Calu3 (cell line): ENCODE measurements at regions of chr4 and their contacts with region 1.

Region 1: DNA sequence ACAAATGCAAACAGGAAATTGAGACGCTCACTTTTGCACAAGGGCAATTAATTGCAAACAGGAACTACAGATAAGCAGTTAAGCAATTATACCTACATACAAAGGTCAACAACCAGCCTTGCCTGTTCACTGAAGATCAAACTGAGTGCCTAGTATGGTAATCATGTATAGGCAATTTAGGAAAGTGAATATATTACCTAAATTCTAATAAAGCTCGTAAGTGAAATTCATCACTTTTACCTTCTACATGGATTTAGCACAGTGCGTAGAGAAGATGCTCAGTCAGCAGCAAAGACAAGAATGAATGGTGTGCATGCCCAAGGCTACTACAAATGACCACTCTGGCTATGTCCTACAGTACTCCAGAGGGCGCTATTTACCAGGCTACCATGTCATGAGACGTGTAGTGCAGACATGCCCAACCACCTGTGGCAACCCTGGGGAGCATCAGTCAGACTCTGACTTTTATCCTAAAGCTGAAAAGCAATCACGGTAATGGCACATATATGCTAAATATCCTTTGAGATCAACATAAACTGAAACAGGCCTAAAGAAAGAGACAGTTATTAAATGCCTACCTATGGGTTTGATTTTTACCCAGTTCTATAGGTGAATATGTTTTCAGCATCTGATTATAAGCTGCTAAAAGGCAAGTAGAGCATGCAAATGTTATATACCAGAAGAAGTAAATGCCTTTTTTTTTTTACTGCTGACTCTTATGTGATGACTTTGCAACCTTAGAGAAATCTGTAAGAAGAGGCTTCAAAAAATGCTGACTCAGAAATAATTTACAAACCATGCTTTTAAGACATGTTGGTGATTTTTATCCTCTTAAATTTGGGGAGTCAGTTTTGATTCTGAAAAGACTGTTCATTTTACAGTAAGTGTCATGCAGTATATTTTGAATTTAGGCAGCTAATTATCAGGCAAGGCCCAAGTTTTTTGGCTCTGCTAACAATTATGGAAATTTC is 178.0 kb downstream of the PPP3CA start:
- DNase-seq: peak; percentile 58
- H3K4me3 Mint-ChIP-seq: no peak overlapping the region
- H3K27ac Mint-ChIP-seq: no peak overlapping the region
- H3K4me1 Mint-ChIP-seq: no peaks in the 10 kb centered on the region
- H3K27me3 Mint-ChIP-seq: no peaks in the 10 kb centered on the region
- CTCF ChIP-seq: peak; percentile 58

Region 2: GRCh38 chr4:100248476-100248875 is 920.9 kb before region 1 on chr4:
- CTCF ChIA-PET with region 1: no interaction called
- intact Hi-C with region 1: no loop called
- DNase-seq: no peak
- H3K4me3 Mint-ChIP-seq: no peak overlapping the region
- H3K27ac Mint-ChIP-seq: no peak overlapping the region
- H3K4me1 Mint-ChIP-seq: no peaks in the 10 kb centered on the region
- H3K27me3 Mint-ChIP-seq: no peaks in the 10 kb centered on the region
- CTCF ChIP-seq: no peak

Region 3: DNA sequence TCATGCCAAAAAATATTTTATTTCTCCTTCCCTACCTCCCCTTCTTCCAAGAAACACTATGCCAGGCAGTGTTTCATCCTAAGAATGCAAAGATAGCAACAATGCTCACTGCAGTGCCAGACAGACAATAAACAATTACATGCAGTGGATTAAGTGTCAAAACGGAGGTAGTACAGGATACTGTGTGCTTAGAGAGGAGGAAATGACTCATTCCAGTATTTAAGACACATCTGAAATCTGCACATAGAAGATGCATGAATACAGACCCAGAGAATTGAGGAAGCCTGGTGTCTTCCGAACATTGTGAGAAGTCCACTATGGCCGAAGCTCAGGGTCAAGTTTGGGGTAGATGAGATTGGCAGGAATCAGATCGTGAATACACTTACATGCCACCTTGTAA is 148.4 kb before region 1 on chr4:
- CTCF ChIA-PET with region 1: no interaction called
- intact Hi-C with region 1: no loop called
- DNase-seq: no peak
- H3K4me3 Mint-ChIP-seq: peak overlapping the region; percentile 38
- H3K27ac Mint-ChIP-seq: peak overlapping the region; percentile 76
- H3K4me1 Mint-ChIP-seq: peaks cover 40% of the 10 kb centered on the region
- H3K27me3 Mint-ChIP-seq: no peaks in the 10 kb centered on the region
- CTCF ChIP-seq: no peak

Region 4: DNA sequence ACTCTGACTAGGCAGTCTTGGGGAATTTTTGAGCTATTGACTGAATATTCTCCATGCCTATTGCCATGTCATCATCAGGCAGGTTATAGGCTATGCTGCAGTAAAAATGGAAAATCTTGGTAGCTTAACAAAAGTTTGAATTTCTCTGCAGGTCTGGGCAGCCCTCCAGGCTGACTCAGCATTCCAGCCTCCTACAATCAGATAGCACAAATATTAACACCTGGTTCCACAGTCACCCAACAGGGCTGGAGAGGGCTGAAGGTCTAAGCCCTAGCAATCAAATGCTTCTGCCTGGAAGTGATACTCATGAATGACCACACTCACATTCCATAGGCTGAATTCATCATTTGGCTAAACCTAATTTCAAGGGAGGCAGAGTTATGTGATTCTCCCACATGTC is 187.6 kb after region 1 on chr4:
- CTCF ChIA-PET with region 1: no interaction called
- intact Hi-C with region 1: loop called (anchors 5 kb)
- DNase-seq: peak; percentile 55
- H3K4me3 Mint-ChIP-seq: peak overlapping the region; percentile 45
- H3K27ac Mint-ChIP-seq: peak overlapping the region; percentile 68
- H3K4me1 Mint-ChIP-seq: peaks cover 41% of the 10 kb centered on the region
- H3K27me3 Mint-ChIP-seq: no peaks in the 10 kb centered on the region
- CTCF ChIP-seq: no peak

Region 5: DNA sequence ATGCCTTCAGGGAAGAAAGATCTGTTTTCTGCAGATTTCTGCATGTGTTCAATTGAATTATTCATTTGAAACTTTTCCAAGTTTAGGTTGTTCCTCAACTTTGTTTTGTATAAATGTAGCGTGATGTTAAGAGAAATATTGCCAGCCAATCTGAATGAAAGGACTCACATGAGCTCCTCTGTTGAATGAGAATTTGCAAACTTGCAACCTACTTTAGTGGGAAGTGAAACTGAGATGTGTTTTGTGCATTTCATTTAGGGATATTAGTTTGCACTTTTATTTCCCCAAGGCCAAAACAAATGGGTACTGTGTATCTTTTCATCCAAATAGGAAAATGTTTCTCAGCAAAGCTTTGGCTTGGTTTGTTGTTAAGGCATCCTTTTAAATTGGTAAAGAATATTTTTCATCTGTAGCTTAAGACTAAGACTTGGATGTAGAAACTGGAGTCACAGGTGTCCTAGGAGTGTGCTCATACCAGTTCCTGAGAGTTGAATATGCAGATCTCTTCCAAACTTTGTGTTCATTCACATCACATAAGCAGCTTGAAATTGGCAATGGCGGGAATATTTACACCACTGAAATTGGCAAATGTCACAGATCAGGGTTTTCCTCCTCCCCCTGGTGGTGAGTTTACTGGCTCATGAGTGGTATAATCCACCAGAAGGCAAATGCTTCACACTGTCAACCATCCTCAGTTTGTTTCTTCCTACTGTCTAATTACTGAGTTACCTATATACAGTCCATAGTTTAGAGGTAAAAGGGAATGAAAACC is 427.6 kb after region 1 on chr4:
- CTCF ChIA-PET with region 1: no interaction called
- intact Hi-C with region 1: loop called (anchors 5 kb)
- DNase-seq: no peak
- H3K4me3 Mint-ChIP-seq: no peak overlapping the region
- H3K27ac Mint-ChIP-seq: no peak overlapping the region
- H3K4me1 Mint-ChIP-seq: peaks cover 6% of the 10 kb centered on the region
- H3K27me3 Mint-ChIP-seq: no peaks in the 10 kb centered on the region
- CTCF ChIP-seq: no peak